Activated CD4-positive, alpha-beta T cell treated with anti-CD3 and anti-CD28 coated beads for 36 hours (primary cell): ENCODE measurements at regions of chr6 and their contacts with region 1.

Region 1: DNA sequence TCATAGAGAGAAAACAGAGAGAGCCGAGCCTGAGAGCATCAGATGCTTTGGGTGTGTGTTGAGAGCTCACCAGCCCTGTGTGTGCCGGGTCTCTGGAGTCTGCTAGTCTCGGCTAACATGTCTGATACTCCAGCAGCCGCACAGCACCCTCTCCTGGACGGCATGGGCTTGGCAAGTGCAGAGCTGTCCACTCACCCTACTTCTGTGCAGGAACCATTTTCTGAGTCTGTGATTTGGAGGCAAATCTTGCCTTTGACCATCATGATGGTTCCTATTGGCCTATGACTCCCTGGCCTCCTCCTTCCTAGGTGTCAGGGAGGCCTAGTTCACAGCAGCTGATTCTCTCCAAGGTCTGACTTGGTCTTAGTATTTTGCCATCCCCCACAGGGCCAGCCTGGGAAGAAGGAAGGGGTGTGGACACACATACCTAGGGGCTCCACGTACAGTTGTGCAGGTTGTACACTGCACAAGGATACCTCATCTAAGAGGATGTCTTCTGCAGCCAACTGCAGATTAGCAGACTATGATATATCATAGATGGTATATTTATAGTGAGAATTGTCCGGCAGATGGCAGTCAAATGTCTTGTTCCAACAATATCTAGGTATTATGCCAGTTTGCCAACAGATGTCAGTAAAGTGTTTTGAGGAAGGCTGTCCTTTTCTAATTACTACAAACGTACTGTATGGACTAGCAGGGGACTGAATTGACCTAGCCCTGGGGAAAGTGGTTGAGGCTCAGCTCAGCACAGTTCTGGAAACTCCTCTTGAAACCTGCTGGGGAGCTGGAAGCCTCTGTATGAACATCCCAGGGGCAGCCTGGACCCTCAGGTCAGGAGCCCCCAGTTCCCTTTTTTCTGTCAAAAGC is 13.0 kb downstream of the FGD2 start:
- DNase-seq: peak; percentile 97
- ATAC-seq: peak; percentile 95
- H3K4me3 Mint-ChIP-seq: no peak overlapping the region
- H3K27ac Mint-ChIP-seq: peak overlapping the region; percentile 61
- H3K4me1 Mint-ChIP-seq: peaks cover 45% of the 10 kb centered on the region
- H3K27me3 Mint-ChIP-seq: no peaks in the 10 kb centered on the region

Region 2: DNA sequence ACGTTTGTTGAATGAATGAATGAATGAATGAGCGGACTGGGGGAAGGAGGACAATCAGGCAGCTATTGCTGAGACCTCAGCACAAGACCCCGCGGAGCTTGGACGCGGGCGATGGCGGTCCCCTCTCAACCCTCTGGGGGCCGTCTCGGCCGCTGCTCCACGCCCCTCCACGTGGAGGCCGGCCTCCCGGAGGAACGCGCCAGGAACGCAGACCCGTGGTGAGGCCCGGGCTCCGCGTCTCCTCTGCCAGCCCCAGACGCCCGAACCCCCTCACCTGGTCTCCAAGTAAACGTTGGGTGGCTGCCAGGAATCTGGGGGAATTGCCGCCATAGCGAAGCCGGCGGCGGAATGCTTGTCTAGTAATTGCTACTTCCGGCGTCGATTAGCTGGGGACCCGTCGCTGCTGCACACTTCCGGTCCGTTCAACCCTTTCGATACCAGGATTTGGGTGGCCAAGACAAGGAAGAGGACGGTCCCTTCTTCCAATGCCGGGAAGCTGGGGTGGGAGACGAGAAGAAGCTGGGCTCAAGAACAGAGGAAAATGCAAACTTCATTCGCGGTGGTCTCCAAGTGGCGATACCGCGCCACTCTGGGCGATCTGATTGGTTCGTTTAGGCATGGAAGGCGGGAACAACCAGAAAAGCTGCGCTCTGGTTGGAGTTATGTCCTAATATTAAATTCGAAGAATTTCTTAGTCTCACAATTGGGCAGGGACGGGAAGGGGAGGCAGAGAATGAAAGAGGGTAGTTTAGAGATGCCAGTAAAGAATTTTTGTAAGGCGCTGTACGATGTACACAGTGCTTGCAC is 143.8 kb before region 1 on chr6 and contains the start of gene PPIL1:
- CTCF ChIA-PET with region 1: interaction called, 26 read pairs
- POLR2A ChIA-PET with region 1: no interaction called
- intact Hi-C with region 1: no loop called
- DNase-seq: peak; percentile 90
- ATAC-seq: peak; percentile 80
- H3K4me3 Mint-ChIP-seq: peak within 1 kb of the TSS; percentile 98
- H3K27ac Mint-ChIP-seq: peak within 1 kb of the TSS; percentile 99
- H3K4me1 Mint-ChIP-seq: peaks cover 45% of the 10 kb centered on the region
- H3K27me3 Mint-ChIP-seq: peaks cover 7% of the 10 kb centered on the region
- total RNA-seq, gene PPIL1: 45.9 to 46.0 TPM

Region 3: DNA sequence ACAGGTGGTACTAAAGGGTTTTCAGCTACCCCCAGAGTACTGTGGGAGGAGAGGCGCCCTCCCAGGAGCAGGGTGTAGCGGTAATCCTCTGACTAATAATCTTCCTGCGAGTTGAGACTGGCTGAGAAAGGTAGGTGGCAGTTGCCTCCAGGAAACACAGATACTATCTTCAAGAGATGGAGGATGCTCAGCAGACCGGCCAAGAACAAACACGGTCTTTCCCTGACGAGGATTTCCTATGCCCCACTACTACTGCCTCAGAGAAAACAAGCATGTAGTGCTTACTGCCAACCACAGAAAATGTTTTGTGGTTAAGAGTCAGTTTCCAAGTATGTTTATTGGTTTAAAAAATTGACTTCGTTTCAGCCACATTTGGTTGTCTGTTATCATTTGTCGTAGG is 105.8 kb before region 1 on chr6:
- CTCF ChIA-PET with region 1: interaction called, 13 read pairs
- POLR2A ChIA-PET with region 1: no interaction called
- intact Hi-C with region 1: loop called in 1 of 2 experiments (anchors 1 kb)
- DNase-seq: peak; percentile 74
- ATAC-seq: peak; percentile 87
- H3K4me3 Mint-ChIP-seq: peak overlapping the region; percentile 37
- H3K27ac Mint-ChIP-seq: peak overlapping the region; percentile 83
- H3K4me1 Mint-ChIP-seq: peaks cover 44% of the 10 kb centered on the region
- H3K27me3 Mint-ChIP-seq: no peaks in the 10 kb centered on the region

Region 4: DNA sequence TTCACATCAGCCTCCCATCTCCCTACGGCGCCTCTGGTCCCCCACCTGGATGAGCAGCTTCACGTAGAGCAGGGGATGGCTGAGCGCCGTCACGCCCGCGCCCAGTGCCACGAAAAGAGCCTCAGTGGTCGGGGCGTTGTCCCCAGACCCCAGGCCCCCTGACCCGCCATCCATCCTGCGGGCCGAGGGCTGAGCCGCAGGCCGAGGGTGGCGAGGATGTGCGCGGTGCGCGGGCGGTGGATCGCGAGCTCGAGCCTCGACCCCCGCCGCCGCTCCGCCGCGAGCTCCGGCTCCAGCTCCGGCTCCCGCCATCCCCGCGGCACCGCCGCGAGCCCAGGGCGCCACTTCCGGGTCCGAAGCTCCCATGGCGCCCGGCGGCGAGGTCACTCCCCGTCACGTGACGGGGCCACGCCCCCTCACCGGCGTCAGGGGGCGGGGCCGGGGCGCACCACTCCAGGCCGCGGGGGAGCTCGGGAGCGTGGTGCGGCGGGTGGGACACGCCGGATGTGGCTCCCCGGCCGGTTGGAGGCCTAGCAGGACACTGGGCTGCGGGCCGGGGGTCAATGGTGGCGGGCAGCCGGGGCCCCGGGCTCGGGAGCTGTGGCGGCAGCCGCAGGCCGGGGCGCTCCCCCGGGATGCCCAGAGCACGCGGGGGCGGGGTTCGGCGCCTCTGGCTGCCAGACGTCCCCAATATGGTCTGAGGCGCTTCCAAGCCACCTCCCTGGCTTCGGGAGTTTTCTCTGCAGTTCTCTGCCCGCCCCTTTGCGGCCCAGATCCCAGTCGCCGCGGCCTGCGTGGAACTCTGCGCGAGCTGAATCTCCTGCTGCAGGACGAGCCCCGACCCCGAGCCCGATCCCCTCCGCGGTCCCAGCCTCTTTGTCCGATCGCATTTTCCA is 32.4 kb before region 1 on chr6 and contains the start of gene MTCH1:
- CTCF ChIA-PET with region 1: interaction called, 7 read pairs
- POLR2A ChIA-PET with region 1: no interaction called
- intact Hi-C with region 1: loop called in 1 of 2 experiments (anchors 1 kb)
- DNase-seq: peak; percentile 93
- ATAC-seq: peak; percentile 80
- H3K4me3 Mint-ChIP-seq: no peak within 1 kb of the TSS
- H3K27ac Mint-ChIP-seq: peak within 1 kb of the TSS; percentile 95
- H3K4me1 Mint-ChIP-seq: peaks cover 18% of the 10 kb centered on the region
- H3K27me3 Mint-ChIP-seq: no peaks in the 10 kb centered on the region
- total RNA-seq, gene MTCH1: 72.9 to 92.9 TPM

Region 5: DNA sequence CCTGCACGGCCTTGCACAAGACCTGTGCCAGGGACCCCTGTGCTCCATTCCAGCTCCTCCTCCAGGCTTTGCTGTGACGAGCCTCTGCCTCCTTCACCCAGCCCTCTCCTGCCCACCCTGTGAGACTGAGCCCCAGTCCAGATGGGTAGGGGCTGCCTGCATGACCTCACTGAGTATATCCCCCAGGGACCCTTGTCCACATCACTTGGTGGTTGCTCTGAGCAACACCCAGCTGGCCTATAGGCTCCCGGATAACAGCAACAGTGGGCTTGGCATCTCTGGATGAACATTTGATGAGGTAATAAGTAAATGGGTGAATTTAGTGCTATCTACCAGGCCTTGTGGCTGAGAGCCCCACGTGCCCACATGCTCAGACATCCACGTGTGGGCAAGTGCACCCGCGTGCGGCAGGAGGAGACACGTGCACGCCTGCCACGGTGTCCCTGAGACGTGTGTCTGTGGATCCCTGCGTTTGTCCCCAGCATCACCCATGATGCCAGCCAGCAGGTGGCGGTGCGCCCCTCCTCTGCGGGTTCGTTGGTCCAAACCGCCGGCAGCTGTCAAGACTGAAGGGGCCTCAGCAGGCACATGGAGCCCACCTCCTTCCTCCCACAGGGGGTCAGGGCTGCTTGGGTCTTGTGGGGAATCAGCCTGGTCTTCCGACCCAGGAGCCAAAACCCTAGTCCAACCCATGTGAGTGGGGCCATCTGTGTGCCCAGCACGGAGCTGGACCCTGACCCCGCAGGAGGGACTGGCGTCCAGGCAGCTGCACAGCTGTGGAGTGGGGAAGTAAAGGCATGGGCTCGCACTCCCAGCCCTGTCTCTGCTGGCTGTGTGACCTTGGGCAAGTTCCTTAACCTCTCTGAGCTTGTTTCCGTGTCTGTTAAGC is 33.0 kb after region 1 on chr6:
- CTCF ChIA-PET with region 1: interaction called, 128 read pairs
- POLR2A ChIA-PET with region 1: interaction called, 4 read pairs
- intact Hi-C with region 1: loop called (anchors 1 to 2 kb)
- DNase-seq: peak; percentile 95
- ATAC-seq: peak; percentile 43
- H3K4me3 Mint-ChIP-seq: peak overlapping the region; percentile 79
- H3K27ac Mint-ChIP-seq: peak overlapping the region; percentile 100
- H3K4me1 Mint-ChIP-seq: peaks cover 55% of the 10 kb centered on the region
- H3K27me3 Mint-ChIP-seq: no peaks in the 10 kb centered on the region

Region 6: GRCh38 chr6:37314487-37315156 is 296.2 kb after region 1 on chr6:
- CTCF ChIA-PET with region 1: interaction called, 3 read pairs
- POLR2A ChIA-PET with region 1: no interaction called
- intact Hi-C with region 1: loop called (anchors 1 to 2 kb)
- DNase-seq: peak; percentile 70
- ATAC-seq: peak; percentile 88
- H3K4me3 Mint-ChIP-seq: no peak overlapping the region
- H3K27ac Mint-ChIP-seq: no peak overlapping the region
- H3K4me1 Mint-ChIP-seq: peaks cover 4% of the 10 kb centered on the region
- H3K27me3 Mint-ChIP-seq: no peaks in the 10 kb centered on the region